ENCODE measurements at regions of chr10 and their contacts with region 1.

Region 1: DNA sequence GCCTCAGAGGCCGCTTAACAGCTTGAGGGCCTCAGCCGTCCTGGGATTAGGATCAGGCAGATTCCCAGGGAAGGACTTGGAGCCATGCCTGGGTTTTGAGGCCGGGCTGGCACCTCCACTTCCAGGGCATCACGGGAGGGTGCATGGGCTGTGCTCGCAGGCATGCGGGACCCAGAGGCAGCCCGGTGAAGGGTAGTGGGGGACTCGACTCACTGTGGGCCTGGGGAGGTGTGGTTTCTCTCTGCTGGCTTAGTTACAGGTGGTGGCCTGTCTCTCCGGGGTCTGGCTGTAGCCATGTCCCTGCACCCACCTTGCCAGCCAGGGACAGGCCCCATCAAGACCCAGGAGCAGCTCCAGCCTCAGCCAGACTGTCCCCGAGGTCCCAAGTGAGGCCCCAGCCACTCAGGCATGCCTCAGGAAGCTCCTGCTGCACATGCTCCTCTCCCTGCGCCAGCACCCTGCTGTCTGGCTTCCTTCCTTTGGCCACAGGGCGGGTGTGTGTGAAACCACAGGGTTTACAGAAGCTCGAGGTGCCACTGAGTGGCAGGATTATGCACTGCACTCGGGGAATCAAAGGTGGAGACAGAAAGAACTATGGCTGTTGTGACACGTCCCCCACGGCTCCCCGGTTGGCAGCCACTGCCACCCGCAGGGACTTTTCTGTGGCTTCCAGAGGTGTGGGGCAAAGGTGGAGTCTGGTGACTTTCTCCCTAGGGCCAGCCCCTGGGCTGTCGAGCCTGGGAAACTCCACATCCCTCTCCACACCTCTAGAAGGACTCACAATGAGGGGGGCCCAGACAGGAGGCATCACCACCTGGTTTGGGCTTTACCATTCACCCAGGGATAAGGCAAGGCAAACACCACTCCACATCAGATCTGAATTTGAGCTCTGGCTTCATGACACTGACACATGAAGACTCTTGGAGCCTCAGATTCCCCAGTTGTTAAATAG is 19.7 kb downstream of the GOLGA7B start:
- DNase-seq: peak; percentile 96
- H3K4me3 ChIP-seq: no peak overlapping the region
- H3K27ac ChIP-seq: peak overlapping the region; percentile 11
- H3K4me1 ChIP-seq: peaks cover 12% of the 10 kb centered on the region
- H3K27me3 ChIP-seq: no peaks in the 10 kb centered on the region
- CTCF ChIP-seq: peak; percentile 82

Region 2: DNA sequence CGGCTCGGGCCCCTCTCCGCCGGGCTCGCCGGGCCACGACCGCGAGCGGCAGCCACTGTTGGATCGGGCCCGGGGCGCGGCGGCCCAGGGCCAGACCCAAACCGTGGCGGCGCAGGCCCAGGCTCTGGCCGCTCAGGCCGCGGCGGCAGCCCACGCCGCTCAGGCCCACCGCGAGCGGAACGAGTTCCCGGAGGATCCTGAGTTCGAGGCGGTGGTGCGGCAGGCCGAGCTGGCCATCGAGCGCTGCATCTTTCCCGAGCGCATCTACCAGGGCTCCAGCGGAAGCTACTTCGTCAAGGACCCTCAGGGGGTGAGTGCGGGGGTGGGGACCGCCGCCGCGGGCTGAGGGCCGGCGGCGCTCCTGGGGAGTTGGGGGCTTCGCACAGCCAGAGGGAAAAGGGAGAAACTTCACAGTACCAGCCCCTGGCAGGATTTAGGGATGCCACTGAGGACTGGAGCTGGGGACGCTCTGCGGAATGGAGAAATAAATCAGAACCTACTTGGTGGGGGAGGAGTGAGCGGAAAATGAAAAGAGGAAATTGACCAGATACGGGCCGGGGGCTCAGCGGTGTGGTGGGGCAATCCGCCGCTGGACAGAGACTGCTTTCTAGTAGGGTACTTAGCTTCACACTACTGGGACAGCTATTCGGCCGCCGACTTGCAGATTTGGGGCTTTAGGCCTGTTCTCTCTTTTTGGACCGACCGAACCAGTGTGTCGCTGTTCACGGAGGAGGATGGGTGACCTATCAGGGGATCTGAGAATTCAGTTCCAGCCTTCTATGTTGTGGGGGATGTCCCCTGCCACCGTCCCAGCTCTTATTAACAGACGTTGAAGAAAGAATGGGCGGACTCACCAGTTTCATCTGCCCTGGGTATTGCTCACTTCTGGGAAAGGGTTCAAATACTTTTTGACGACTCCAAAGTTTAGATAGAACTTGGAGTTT is 228.2 kb before region 1 on chr10:
- CTCF ChIA-PET with region 1: no interaction called
- POLR2A ChIA-PET with region 1: no interaction called
- intact Hi-C with region 1: no loop called
- DNase-seq: peak; percentile 47
- H3K4me3 ChIP-seq: peak overlapping the region; percentile 90
- H3K27ac ChIP-seq: peak overlapping the region; percentile 70
- H3K4me1 ChIP-seq: peaks cover 6% of the 10 kb centered on the region
- H3K27me3 ChIP-seq: no peaks in the 10 kb centered on the region
- CTCF ChIP-seq: no peak

Region 3: DNA sequence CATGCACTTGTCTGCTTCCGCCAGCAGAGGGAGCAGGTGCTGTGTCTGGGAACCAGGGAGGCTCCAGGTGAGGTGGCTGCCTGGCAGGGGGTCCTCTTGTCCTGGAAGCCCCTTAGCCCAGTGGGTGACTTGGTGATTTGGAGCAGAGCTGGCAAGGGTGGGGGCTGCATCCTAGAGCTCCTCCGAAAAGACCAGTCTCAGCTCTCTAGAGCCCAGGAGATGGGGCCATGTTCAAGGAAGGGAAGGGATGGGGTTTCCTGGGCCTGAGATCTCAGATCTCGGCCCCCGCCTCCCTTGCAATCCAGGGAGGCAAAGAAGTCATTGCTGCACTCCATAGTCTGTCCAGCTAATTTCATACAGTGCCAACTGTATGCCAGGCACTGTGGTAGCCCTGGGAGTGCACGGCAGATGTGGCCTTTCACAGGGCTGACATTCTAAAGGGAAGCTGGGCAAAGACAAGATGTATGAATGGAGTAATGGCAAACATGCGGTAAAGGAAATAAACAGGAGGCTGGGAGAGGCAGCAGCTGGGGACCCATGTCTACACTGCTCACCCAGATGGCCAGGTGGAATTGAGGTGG is 77.1 kb before region 1 on chr10:
- CTCF ChIA-PET with region 1: interaction called, 11 read pairs
- POLR2A ChIA-PET with region 1: no interaction called
- intact Hi-C with region 1: loop called (anchors 1 kb)
- DNase-seq: peak; percentile 63
- H3K4me3 ChIP-seq: no peak overlapping the region
- H3K27ac ChIP-seq: no peak overlapping the region
- H3K4me1 ChIP-seq: no peaks in the 10 kb centered on the region
- H3K27me3 ChIP-seq: no peaks in the 10 kb centered on the region
- CTCF ChIP-seq: peak; percentile 94